Activated CD4-positive, alpha-beta T cell treated with anti-CD3 and anti-CD28 coated beads, Interleukin-2, amount 10 ng/mL, durations not matched to agents 7 days and 5 days (primary cell): ENCODE measurements at regions of chr7 and their contacts with region 1.

Region 1: GRCh38 chr7:74026903-74027551 is 946 bp upstream of the ELN start:
- DNase-seq: peak; percentile 60
- H3K4me3 Mint-ChIP-seq: no peak overlapping the region
- H3K27ac Mint-ChIP-seq: no peak overlapping the region
- H3K4me1 Mint-ChIP-seq: no peaks in the 10 kb centered on the region
- H3K27me3 Mint-ChIP-seq: peaks cover 48% of the 10 kb centered on the region

Region 2: GRCh38 chr7:74039346-74039745 is 12.3 kb after region 1 on chr7:
- CTCF ChIA-PET with region 1: interaction called, 12 read pairs
- POLR2A ChIA-PET with region 1: no interaction called
- DNase-seq: no peak
- H3K4me3 Mint-ChIP-seq: no peak overlapping the region
- H3K27ac Mint-ChIP-seq: no peak overlapping the region
- H3K4me1 Mint-ChIP-seq: no peaks in the 10 kb centered on the region
- H3K27me3 Mint-ChIP-seq: no peaks in the 10 kb centered on the region

Region 3: GRCh38 chr7:74092321-74092963 is 65.4 kb after region 1 on chr7:
- CTCF ChIA-PET with region 1: interaction called, 3 read pairs
- POLR2A ChIA-PET with region 1: interaction called, 16 read pairs
- DNase-seq: no peak
- H3K4me3 Mint-ChIP-seq: no peak overlapping the region
- H3K27ac Mint-ChIP-seq: peak overlapping the region; percentile 81
- H3K4me1 Mint-ChIP-seq: peaks cover 23% of the 10 kb centered on the region
- H3K27me3 Mint-ChIP-seq: no peaks in the 10 kb centered on the region

Region 4: GRCh38 chr7:74133671-74134048 is 106.6 kb after region 1 on chr7:
- CTCF ChIA-PET with region 1: no interaction called
- POLR2A ChIA-PET with region 1: no interaction called
- DNase-seq: no peak
- H3K4me3 Mint-ChIP-seq: no peak overlapping the region
- H3K27ac Mint-ChIP-seq: no peak overlapping the region
- H3K4me1 Mint-ChIP-seq: peaks cover 3% of the 10 kb centered on the region
- H3K27me3 Mint-ChIP-seq: peaks cover 2% of the 10 kb centered on the region

Region 5: GRCh38 chr7:74148491-74148890 is 121.5 kb after region 1 on chr7:
- CTCF ChIA-PET with region 1: no interaction called
- POLR2A ChIA-PET with region 1: no interaction called
- DNase-seq: no peak
- H3K4me3 Mint-ChIP-seq: no peak overlapping the region
- H3K27ac Mint-ChIP-seq: no peak overlapping the region
- H3K4me1 Mint-ChIP-seq: no peaks in the 10 kb centered on the region
- H3K27me3 Mint-ChIP-seq: peaks cover 3% of the 10 kb centered on the region

Region 6: GRCh38 chr7:74334030-74334429 is 307.0 kb after region 1 on chr7:
- CTCF ChIA-PET with region 1: no interaction called
- POLR2A ChIA-PET with region 1: no interaction called
- DNase-seq: no peak
- H3K4me3 Mint-ChIP-seq: no peak overlapping the region
- H3K27ac Mint-ChIP-seq: no peak overlapping the region
- H3K4me1 Mint-ChIP-seq: no peaks in the 10 kb centered on the region
- H3K27me3 Mint-ChIP-seq: no peaks in the 10 kb centered on the region